ENCODE measurements at regions of chr1 and their contacts with region 1.

Region 1: DNA sequence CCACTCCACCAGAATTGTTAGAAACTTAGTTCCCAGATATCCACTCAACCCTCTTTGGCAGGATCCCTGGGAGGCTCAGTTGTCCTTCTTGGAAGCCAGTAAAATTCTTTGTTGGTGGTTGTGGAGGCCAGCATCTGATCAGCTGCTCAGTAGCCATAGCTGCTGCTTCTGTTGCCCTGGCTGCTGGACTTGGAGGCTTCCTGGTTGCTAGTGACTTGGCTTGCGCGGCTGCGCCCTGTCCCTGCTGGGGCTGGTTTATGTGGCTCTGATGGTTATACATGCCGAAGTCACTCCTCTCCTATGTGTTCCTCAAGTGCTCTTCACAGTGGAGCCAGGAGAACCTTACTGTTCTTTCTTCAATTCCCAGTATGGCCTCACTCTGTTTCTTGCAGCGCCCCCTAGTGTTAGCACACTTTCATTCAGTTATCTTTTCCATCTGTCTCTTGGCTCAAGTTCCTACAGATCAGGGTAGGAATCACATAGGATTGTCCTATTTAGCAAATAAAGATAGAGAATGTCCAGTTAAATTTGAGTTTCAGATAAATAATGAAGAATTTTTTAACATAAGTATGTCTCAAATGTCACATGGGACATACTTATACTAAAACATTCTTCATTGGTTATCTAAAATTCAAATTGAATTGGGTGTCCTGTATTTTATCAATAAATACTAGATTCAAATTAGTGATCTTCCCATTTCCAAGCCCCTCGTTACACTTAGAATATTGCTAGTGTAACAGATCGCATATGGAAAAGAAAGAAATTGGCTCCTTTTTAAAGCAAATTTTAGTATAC is 176.4 kb downstream of the TGFB2 start:
- DNase-seq: peak; percentile 67
- ATAC-seq: no peak
- H3K4me3 Mint-ChIP-seq: no peak overlapping the region
- H3K27ac Mint-ChIP-seq: no peak overlapping the region
- H3K4me1 Mint-ChIP-seq: no peaks in the 10 kb centered on the region
- H3K27me3 Mint-ChIP-seq: peaks cover 9% of the 10 kb centered on the region
- CTCF ChIP-seq: peak; percentile 83

Region 2: GRCh38 chr1:218339267-218339831 is 182.2 kb before region 1 on chr1:
- CTCF ChIA-PET with region 1: interaction called, 7 read pairs
- POLR2A ChIA-PET with region 1: no interaction called
- intact Hi-C with region 1: loop called (anchors 1 kb)
- DNase-seq: no peak
- ATAC-seq: no peak
- H3K4me3 Mint-ChIP-seq: no peak overlapping the region
- H3K27ac Mint-ChIP-seq: no peak overlapping the region
- H3K4me1 Mint-ChIP-seq: no peaks in the 10 kb centered on the region
- H3K27me3 Mint-ChIP-seq: peaks cover 8% of the 10 kb centered on the region
- CTCF ChIP-seq: peak; percentile 74

Region 3: DNA sequence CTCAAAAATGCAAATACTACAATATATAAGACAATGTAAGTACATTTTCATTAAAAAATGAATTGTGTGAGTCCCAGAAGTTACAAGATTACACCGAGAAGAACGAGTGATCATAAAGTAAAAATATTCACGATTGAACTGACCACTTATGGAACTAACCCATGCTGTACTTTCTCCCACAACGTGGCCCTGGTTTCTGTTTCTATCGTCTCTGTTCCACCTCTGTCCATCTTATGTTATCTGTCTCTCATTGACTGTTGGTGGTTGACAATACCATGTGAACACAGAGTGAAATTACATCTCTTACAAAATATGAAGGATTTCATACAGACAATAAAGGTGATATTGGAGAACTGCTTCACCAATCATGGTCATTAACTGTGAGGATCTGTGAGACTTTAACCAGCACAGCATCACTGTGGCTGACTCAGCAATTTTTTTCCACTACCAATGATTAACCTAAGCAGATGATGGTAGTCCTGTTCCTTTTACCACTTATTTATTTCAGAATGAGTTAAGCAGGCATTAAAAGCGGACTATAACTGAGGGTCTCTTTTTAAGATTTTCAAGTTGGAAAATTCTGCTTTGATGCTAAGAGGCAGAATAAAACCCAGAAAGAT is 11.3 kb before region 1 on chr1:
- CTCF ChIA-PET with region 1: no interaction called
- POLR2A ChIA-PET with region 1: no interaction called
- intact Hi-C with region 1: no loop called
- DNase-seq: no peak
- ATAC-seq: no peak
- H3K4me3 Mint-ChIP-seq: no peak overlapping the region
- H3K27ac Mint-ChIP-seq: no peak overlapping the region
- H3K4me1 Mint-ChIP-seq: no peaks in the 10 kb centered on the region
- H3K27me3 Mint-ChIP-seq: peaks cover 9% of the 10 kb centered on the region
- CTCF ChIP-seq: no peak

Region 4: DNA sequence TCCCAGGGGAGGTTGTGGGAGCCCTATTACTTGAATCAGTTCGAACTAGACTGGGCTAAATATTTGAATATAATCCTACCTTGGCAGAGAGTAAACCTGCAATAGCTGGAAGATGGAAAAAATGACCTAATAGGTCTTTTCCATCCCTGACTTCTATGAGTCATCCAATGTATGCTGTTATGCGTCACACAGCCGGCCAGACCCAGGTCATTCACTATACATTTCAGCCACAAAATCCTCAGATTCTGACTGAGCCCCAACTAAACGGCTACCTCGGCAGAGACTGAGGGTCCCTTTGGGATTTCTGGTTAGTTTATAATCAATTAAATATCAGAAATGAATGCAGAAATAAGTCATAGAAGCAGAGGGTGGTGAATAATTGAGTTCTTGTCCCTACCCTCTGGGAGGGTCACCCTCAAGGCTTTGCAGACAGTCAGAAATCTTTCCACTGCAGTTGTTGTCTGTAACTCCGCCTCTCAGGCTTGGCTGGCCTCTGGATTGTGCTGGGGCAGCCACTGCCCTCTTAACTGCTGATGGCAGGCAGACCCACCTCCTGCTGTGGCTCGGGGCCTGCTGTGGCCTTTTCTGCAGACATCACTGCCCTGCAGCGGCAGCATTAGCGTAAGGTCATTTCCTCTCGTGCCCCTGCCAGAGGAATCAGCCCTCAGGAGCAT is 64.1 kb after region 1 on chr1:
- CTCF ChIA-PET with region 1: no interaction called
- POLR2A ChIA-PET with region 1: no interaction called
- intact Hi-C with region 1: no loop called
- DNase-seq: no peak
- ATAC-seq: no peak
- H3K4me3 Mint-ChIP-seq: no peak overlapping the region
- H3K27ac Mint-ChIP-seq: no peak overlapping the region
- H3K4me1 Mint-ChIP-seq: no peaks in the 10 kb centered on the region
- H3K27me3 Mint-ChIP-seq: peaks cover 17% of the 10 kb centered on the region
- CTCF ChIP-seq: no peak